ENCODE measurements at regions of chr7 and their contacts with region 1.

Region 1: DNA sequence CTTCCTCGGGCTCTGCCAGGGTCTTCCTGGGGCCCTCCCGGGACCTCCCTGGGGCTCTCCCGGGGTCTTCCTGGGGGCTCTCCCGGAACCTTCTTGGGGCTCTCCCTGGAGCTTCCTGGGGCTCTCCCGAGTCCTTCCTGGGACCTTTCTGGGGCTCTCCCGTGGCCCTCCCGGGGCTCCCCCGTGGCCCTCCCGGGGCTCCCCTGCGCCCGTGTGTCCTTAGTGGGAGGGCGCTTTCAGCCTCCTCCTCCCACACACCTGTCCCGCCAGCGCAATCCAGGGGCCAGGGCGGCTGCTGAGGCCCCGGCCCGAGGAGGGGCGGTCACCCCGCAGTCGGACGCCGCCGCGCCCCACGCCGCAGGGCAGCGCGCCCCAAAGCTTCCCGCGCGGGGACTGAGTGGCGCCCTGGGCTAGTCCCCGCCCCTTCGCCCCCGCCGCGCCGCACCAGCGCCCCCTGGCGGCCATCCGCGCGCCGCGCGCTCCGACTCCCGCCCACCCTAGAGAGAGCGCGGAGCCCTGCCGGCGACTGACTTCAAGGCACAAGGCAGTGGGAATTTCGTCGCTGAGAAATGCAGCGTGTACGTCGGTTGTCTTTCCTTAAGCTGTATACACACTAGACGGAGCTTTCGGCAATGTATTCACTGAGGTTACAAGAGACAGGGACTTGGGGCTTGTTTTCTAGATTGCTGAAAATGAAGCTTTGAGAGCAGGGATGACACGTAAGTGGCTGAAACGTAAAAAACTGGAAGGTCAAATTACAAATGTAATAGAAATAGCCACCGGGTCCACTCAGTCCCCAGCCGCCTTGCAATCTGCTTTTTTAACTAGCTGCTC is 47.1 kb downstream of the INSIG1 start:
- DNase-seq: peak; percentile 70
- H3K4me3 ChIP-seq: peak overlapping the region in 1 of 3 experiments; percentile 14
- H3K27ac ChIP-seq: no peak overlapping the region
- H3K4me1 ChIP-seq: no peaks in the 10 kb centered on the region
- H3K27me3 ChIP-seq: peaks cover 2 to 3% of the 10 kb centered on the region in 2 experiments
- CTCF ChIP-seq: peak; percentile 79 to 82
- POLR2A ChIP-seq: no peak

Region 2: GRCh38 chr7:155003376-155004214 is 341.2 kb before region 1 on chr7:
- CTCF ChIA-PET with region 1: interaction called, 12 read pairs
- POLR2A ChIA-PET with region 1: interaction called, 3 read pairs
- dilution Hi-C with region 1: no loop called
- intact Hi-C with region 1: loop called (anchors 1 kb)
- DNase-seq: peak; percentile 71
- H3K4me3 ChIP-seq: peak overlapping the region; percentile 91 to 94 (median 92)
- H3K27ac ChIP-seq: peak overlapping the region; percentile 87
- H3K4me1 ChIP-seq: peaks cover 11% of the 10 kb centered on the region
- H3K27me3 ChIP-seq: no peaks in the 10 kb centered on the region
- CTCF ChIP-seq: no peak
- POLR2A ChIP-seq: peak; percentile 75

Region 3: GRCh38 chr7:155190688-155191087 is 154.1 kb before region 1 on chr7:
- CTCF ChIA-PET with region 1: interaction called, 61 read pairs
- POLR2A ChIA-PET with region 1: no interaction called
- dilution Hi-C with region 1: loop called (anchors 25 kb)
- intact Hi-C with region 1: loop called (anchors 1 kb)
- DNase-seq: peak; percentile 20
- H3K4me3 ChIP-seq: no peak overlapping the region
- H3K27ac ChIP-seq: no peak overlapping the region
- H3K4me1 ChIP-seq: no peaks in the 10 kb centered on the region
- H3K27me3 ChIP-seq: peaks cover under 1 to 6% of the 10 kb centered on the region in 2 experiments
- CTCF ChIP-seq: peak; percentile 83 to 94
- POLR2A ChIP-seq: no peak

Region 4: GRCh38 chr7:155234158-155234492 is 110.7 kb before region 1 on chr7:
- CTCF ChIA-PET with region 1: interaction called, 4 read pairs
- POLR2A ChIA-PET with region 1: no interaction called
- dilution Hi-C with region 1: no loop called
- intact Hi-C with region 1: loop called (anchors 1 kb)
- DNase-seq: no peak
- H3K4me3 ChIP-seq: no peak overlapping the region
- H3K27ac ChIP-seq: no peak overlapping the region
- H3K4me1 ChIP-seq: no peaks in the 10 kb centered on the region
- H3K27me3 ChIP-seq: no peaks in the 10 kb centered on the region
- CTCF ChIP-seq: no peak
- POLR2A ChIP-seq: no peak

Region 5: DNA sequence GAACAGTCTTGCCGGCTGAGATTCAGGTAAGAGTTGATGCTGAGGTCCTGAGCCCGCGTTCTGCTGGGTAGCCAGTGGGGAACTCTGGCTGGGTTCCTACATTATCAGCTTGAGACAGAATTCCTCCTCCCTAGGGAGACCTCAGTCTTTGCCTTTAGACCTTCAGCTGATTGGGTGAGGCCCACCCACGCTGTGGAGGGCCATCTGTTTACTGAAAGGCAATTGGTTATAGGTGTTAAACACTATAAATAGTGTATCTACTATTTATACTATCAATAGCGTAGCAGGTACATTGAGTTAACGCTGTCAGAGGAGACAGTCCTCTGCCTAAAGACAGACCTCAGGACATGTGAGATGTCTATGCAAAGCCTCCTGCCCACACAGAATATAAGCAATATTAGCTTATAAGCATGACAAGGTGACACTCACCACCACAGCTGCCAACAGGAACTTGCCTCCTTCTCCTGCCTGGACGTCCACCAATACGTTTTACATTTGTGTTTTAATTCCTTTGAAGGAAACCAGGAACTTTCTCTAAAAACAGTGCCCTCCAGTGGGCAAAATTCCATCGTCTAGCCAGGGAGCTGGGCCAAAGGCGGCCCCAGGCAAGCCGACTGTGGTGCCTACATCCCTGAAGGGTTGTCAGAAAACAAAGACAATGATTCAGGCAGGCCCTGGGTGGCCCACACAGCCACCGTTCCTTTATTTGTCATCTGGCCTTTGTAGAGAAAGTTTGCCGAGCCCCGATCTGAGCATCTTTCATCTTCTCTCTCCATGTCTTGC is 11.7 kb after region 1 on chr7:
- CTCF ChIA-PET with region 1: interaction called, 20 read pairs
- POLR2A ChIA-PET with region 1: no interaction called
- dilution Hi-C with region 1: no loop called
- intact Hi-C with region 1: no loop called
- DNase-seq: peak; percentile 30
- H3K4me3 ChIP-seq: no peak overlapping the region
- H3K27ac ChIP-seq: no peak overlapping the region
- H3K4me1 ChIP-seq: no peaks in the 10 kb centered on the region
- H3K27me3 ChIP-seq: peaks cover 0 to 3% of the 10 kb centered on the region in 2 experiments
- CTCF ChIP-seq: peak; percentile 43 to 44
- POLR2A ChIP-seq: no peak

Measured in endothelial cell of umbilical vein (primary cell).